CD4-positive, alpha-beta T cell (primary cell): ENCODE measurements at regions of chr1 and their contacts with region 1.

Region 1: DNA sequence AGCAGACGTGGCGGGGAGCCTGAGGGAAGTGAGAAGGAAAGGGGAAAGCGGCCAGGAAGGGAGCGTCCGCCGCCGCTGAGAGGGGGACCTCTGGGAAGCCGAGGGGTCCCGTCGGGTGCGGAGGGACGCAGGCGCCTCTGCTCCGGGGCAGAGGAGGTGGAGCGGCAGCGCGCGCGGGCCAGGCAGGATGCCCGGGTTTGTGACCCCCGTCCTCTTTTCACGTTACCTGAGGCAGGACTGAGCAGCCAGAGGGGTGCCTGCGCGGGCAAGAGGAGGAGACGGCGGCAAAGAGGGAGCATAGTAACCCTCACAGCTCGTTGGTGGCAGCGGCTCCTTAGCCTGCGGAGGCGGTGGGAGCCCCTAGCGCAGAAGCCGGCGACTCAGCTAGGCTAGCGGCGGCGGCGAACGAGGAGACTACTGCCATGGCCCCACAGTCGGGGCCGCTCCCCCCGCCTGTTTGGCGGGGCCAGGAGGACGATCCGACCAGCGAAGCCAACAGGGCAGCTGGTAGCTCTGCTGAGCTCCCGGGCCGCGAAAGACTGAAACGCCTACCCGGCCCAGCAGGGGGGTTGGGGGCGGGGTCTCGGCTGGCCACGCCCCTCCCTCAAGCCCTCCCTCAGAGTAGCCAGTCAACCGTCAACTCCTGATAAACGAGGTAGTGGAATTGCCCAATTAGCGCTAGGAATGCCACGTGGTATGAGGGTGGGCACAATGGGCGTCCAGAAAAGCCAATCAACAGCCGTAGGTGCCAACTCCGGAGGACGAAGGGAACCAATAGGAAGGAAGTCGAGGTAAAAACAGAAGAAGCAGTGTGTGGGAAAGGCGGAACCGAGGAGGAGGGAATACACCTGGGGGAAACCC is at the start of gene TESK2:
- DNase-seq: peak; percentile 92 to 100 (median 95)
- ATAC-seq: peak; percentile 92
- H3K4me3 ChIP-seq: peak within 1 kb of the TSS; percentile 82
- H3K4me3 Mint-ChIP-seq: no peak within 1 kb of the TSS
- H3K27ac ChIP-seq: peak within 1 kb of the TSS; percentile 55 to 70
- H3K27ac Mint-ChIP-seq: no peak within 1 kb of the TSS
- H3K4me1 ChIP-seq: peaks cover 28% of the 10 kb centered on the region
- H3K4me1 Mint-ChIP-seq: peaks cover 5% of the 10 kb centered on the region
- H3K27me3 ChIP-seq: no peaks in the 10 kb centered on the region
- H3K27me3 Mint-ChIP-seq: no peaks in the 10 kb centered on the region
- CTCF ChIP-seq: no peak
- total RNA-seq, gene TESK2: 2.8 to 3.4 TPM

Region 2: DNA sequence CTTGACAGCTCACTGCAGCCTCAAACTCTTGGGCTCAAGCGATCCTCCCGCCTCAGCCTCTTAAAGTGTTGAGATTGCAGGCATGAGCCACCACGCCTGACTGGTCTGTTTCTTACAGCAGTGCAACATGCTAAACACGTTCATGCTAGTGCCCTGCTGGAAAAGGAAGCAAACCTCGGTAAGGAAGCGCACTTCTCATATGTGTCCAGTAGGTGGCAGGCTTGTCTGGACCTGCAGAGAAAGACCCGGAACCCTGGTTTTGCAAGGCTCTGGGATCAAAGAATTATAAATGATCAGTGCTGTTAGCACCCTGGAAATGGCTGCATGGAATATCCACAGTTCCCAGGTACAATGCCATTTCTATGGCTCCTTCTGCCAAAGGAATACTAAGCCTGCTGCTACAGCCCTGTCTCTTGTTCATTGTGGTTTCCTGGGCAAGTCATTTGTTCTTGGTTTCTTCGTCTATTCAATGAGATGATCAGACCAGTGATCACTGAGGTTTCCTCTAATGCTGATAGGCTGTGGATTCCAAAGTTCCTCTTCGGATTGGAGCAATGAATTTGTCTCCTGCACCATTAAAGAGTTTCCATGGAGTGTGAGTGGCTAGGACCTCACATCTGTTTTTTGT is 775.8 kb before region 1 on chr1:
- CTCF ChIA-PET with region 1: no interaction called
- POLR2A ChIA-PET with region 1: no interaction called
- intact Hi-C with region 1: loop called (anchors 5 kb)
- DNase-seq: peak; percentile 48 to 88 (median 56)
- ATAC-seq: peak; percentile 93
- H3K4me3 ChIP-seq: peak overlapping the region; percentile 20
- H3K4me3 Mint-ChIP-seq: peak overlapping the region; percentile 69
- H3K27ac ChIP-seq: no peak overlapping the region
- H3K27ac Mint-ChIP-seq: peak overlapping the region; percentile 78
- H3K4me1 ChIP-seq: peaks cover 44% of the 10 kb centered on the region
- H3K4me1 Mint-ChIP-seq: peaks cover 44% of the 10 kb centered on the region
- H3K27me3 ChIP-seq: no peaks in the 10 kb centered on the region
- H3K27me3 Mint-ChIP-seq: no peaks in the 10 kb centered on the region
- CTCF ChIP-seq: peak; percentile 98

Region 3: DNA sequence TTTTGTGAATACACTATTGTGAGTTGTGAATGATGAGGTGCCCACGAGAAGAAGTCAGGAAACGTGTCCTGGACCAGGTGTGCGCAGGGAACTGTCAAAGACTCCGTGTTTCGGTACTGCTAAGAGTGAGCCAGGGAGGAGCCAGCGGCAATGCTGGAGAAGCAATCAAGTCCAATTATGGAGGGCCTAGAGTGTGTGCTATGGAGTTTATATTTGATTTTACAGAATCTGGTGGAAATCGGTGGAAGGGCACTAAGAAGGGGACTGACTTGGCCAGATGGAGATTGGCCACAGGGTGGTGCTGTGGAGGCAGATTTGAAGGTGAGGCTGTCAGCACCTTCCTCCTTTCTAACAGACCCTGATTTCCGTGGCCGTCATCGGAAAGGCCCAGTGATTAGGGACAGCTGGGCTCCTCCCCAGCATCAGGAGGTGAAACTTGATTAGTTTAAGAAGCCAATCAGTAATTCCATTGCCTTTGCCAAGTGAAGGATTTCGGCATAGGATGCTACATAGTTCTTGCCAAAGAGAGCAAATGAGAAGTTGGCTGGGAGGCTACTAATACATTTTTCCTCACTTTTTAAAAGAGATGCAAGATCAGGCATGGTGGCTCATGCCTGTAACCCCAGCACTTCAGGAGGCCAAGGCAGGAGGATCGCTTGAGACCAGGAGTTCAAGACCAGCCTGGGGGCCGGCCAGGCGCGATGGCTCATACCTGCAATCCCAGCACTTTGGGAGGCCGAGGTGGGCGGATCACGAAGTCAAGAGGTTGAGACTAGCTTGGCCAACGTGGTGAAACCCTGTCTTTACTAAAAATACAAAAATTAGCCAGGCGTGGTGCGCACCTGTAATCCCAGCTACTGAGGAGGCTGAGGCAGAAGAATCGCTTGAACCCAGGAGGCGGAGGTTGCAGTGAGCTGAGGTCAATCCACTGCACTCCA is 654.8 kb before region 1 on chr1:
- CTCF ChIA-PET with region 1: no interaction called
- POLR2A ChIA-PET with region 1: no interaction called
- intact Hi-C with region 1: loop called in 1 of 2 experiments (anchors 2 kb)
- DNase-seq: peak; percentile 77 to 93 (median 84)
- ATAC-seq: peak; percentile 98
- H3K4me3 ChIP-seq: no peak overlapping the region
- H3K4me3 Mint-ChIP-seq: no peak overlapping the region
- H3K27ac ChIP-seq: no peak overlapping the region
- H3K27ac Mint-ChIP-seq: no peak overlapping the region
- H3K4me1 ChIP-seq: peaks cover 9% of the 10 kb centered on the region
- H3K4me1 Mint-ChIP-seq: peaks cover 8% of the 10 kb centered on the region
- H3K27me3 ChIP-seq: no peaks in the 10 kb centered on the region
- H3K27me3 Mint-ChIP-seq: peaks cover 11% of the 10 kb centered on the region
- CTCF ChIP-seq: peak; percentile 91

Region 4: GRCh38 chr1:45272983-45273382 is 217.9 kb before region 1 on chr1:
- CTCF ChIA-PET with region 1: no interaction called
- POLR2A ChIA-PET with region 1: no interaction called
- intact Hi-C with region 1: no loop called
- DNase-seq: peak in 2 of 14 experiments; percentile 25 to 49
- ATAC-seq: no peak
- H3K4me3 ChIP-seq: no peak overlapping the region
- H3K4me3 Mint-ChIP-seq: no peak overlapping the region
- H3K27ac ChIP-seq: no peak overlapping the region
- H3K27ac Mint-ChIP-seq: no peak overlapping the region
- H3K4me1 ChIP-seq: no peaks in the 10 kb centered on the region
- H3K4me1 Mint-ChIP-seq: no peaks in the 10 kb centered on the region
- H3K27me3 ChIP-seq: no peaks in the 10 kb centered on the region
- H3K27me3 Mint-ChIP-seq: no peaks in the 10 kb centered on the region
- CTCF ChIP-seq: no peak

Region 5: DNA sequence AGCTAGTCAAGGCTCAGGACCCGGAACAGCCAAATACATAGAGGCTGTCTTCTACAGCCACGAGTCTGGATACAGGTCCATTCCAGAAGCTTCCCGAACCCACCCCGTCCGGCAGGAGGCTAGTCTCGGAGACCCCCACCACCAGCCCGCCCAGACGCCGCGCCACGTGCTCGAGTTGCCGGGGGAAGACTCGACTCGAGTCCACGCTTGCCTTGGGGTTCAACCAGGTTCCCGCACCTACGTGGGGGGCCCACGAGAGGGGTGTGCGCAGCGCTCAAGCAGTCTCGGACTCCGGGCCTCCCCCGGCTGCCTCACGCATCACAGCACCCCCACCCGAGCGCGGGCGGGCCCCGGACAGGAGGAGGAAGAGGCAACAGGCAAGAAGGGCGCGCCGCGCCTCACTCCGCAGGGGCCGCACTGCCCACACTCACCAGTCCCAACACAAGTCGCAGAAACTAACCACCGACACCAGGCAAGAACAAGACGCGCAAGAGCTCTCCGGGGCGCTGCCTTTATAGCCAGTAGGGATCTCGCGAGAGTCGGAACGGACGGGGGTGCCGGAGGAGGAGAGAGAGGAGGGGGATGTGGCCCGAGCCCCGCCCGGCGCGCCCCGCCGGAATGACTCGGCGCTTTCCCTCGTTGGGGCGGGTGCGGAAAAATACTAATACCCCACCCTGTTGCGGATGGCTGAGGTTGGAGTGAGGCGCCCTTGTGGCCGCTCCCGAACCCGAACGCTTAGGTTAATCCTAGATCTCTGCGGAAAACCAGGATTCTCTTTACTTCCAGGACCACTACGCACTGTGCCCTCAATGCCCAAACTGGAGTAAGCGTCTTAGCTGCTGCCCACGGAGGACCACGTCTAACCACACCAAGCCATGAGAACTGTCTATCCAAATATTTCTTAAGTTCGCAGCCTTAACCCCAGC is 30.8 kb after region 1 on chr1 and contains the start of gene PRDX1:
- CTCF ChIA-PET with region 1: no interaction called
- POLR2A ChIA-PET with region 1: interaction called, 27 read pairs
- intact Hi-C with region 1: no loop called
- DNase-seq: peak; percentile 93 to 97 (median 96)
- ATAC-seq: peak; percentile 90
- H3K4me3 ChIP-seq: peak within 1 kb of the TSS; percentile 90
- H3K4me3 Mint-ChIP-seq: peak within 1 kb of the TSS; percentile 97
- H3K27ac ChIP-seq: peak within 1 kb of the TSS; percentile 61 to 65
- H3K27ac Mint-ChIP-seq: peak within 1 kb of the TSS; percentile 86
- H3K4me1 ChIP-seq: peaks cover 36% of the 10 kb centered on the region
- H3K4me1 Mint-ChIP-seq: peaks cover 30% of the 10 kb centered on the region
- H3K27me3 ChIP-seq: no peaks in the 10 kb centered on the region
- H3K27me3 Mint-ChIP-seq: no peaks in the 10 kb centered on the region
- CTCF ChIP-seq: no peak
- total RNA-seq, gene PRDX1: 18.1 to 24.1 TPM

Region 6: GRCh38 chr1:45809761-45810160 is 318.9 kb after region 1 on chr1:
- CTCF ChIA-PET with region 1: no interaction called
- POLR2A ChIA-PET with region 1: no interaction called
- intact Hi-C with region 1: loop called in 1 of 2 experiments (anchors 5 kb)
- DNase-seq: no peak
- ATAC-seq: no peak
- H3K4me3 ChIP-seq: no peak overlapping the region
- H3K4me3 Mint-ChIP-seq: no peak overlapping the region
- H3K27ac ChIP-seq: no peak overlapping the region
- H3K27ac Mint-ChIP-seq: no peak overlapping the region
- H3K4me1 ChIP-seq: no peaks in the 10 kb centered on the region
- H3K4me1 Mint-ChIP-seq: peaks cover 9% of the 10 kb centered on the region
- H3K27me3 ChIP-seq: no peaks in the 10 kb centered on the region
- H3K27me3 Mint-ChIP-seq: no peaks in the 10 kb centered on the region
- CTCF ChIP-seq: no peak